Mammary epithelial cell (primary cell): ENCODE measurements at regions of chr1 and their contacts with region 1.

Region 1: GRCh38 chr1:235415008-235415904 is 48.0 kb downstream of the TBCE start:
- DNase-seq: peak; percentile 67
- H3K4me3 ChIP-seq: no peak overlapping the region
- H3K27ac ChIP-seq: no peak overlapping the region
- H3K4me1 ChIP-seq: peaks cover 4% of the 10 kb centered on the region
- H3K27me3 ChIP-seq: no peaks in the 10 kb centered on the region
- CTCF ChIP-seq: peak; percentile 66 to 83

Region 2: GRCh38 chr1:234478481-234479309 is 936.6 kb before region 1 on chr1 and contains the start of gene TARBP1:
- CTCF ChIA-PET with region 1: no interaction called
- dilution Hi-C with region 1: no loop called
- in situ Hi-C with region 1: loop called in 1 of 2 experiments (anchors 25 kb)
- intact Hi-C with region 1: no loop called
- DNase-seq: peak; percentile 73
- H3K4me3 ChIP-seq: peak within 1 kb of the TSS; percentile 73 to 82 (median 78)
- H3K27ac ChIP-seq: no peak within 1 kb of the TSS
- H3K4me1 ChIP-seq: peaks cover 11% of the 10 kb centered on the region
- H3K27me3 ChIP-seq: no peaks in the 10 kb centered on the region
- CTCF ChIP-seq: peak in 1 of 2 donors; percentile 16
- total RNA-seq, gene TARBP1: 16.1 to 18.0 TPM

Region 3: GRCh38 chr1:235093696-235094592 is 321.3 kb before region 1 on chr1:
- CTCF ChIA-PET with region 1: no interaction called
- dilution Hi-C with region 1: no loop called
- in situ Hi-C with region 1: no loop called
- intact Hi-C with region 1: loop called (anchors 1 kb)
- DNase-seq: no peak
- H3K4me3 ChIP-seq: no peak overlapping the region
- H3K27ac ChIP-seq: no peak overlapping the region
- H3K4me1 ChIP-seq: no peaks in the 10 kb centered on the region
- H3K27me3 ChIP-seq: no peaks in the 10 kb centered on the region
- CTCF ChIP-seq: peak; percentile 90 to 92

Region 4: DNA sequence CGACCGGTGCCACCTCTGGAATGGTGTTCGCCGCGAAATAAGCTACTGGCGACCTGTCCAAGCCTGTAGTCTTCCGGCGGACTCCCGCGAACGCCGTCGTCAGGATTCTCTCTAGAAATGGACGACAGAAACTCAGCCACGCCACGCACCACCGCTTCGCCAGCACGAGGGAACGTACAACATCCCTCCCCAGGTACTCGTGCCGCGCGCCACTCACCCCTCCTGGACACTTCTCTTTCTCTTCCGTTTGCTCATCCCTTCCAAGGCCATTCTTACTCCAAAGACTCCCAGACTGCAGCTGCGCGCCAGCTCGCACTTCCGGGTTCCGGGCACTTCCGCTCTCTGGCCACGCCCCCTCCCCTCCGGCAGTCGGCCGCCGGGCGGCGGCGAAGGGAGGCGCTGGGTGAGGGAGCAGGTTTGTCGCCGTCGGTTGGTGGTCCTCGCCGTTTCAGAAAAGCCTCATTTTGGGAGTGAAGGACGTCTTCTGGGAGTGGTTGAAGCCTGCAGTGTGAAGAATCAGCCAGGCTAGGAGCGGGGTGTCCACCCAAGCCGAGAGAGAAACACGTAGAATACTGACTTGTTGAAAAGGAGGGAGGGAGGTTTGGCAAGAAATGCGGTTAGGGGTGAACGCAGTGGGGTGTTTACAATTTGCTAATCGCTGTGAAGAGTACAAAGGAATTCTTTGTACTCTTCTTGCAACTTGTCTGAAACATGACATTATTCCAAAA is 254.1 kb before region 1 on chr1 and contains the start of gene RBM34:
- CTCF ChIA-PET with region 1: no interaction called
- dilution Hi-C with region 1: no loop called
- in situ Hi-C with region 1: no loop called
- intact Hi-C with region 1: loop called (anchors 2 kb)
- DNase-seq: peak; percentile 90
- H3K4me3 ChIP-seq: peak within 1 kb of the TSS; percentile 76 to 94 (median 81)
- H3K27ac ChIP-seq: peak within 1 kb of the TSS; percentile 90
- H3K4me1 ChIP-seq: peaks cover 12% of the 10 kb centered on the region
- H3K27me3 ChIP-seq: no peaks in the 10 kb centered on the region
- CTCF ChIP-seq: peak in 1 of 2 donors; percentile 28
- total RNA-seq, gene RBM34: 44.8 to 96.2 TPM

Region 5: DNA sequence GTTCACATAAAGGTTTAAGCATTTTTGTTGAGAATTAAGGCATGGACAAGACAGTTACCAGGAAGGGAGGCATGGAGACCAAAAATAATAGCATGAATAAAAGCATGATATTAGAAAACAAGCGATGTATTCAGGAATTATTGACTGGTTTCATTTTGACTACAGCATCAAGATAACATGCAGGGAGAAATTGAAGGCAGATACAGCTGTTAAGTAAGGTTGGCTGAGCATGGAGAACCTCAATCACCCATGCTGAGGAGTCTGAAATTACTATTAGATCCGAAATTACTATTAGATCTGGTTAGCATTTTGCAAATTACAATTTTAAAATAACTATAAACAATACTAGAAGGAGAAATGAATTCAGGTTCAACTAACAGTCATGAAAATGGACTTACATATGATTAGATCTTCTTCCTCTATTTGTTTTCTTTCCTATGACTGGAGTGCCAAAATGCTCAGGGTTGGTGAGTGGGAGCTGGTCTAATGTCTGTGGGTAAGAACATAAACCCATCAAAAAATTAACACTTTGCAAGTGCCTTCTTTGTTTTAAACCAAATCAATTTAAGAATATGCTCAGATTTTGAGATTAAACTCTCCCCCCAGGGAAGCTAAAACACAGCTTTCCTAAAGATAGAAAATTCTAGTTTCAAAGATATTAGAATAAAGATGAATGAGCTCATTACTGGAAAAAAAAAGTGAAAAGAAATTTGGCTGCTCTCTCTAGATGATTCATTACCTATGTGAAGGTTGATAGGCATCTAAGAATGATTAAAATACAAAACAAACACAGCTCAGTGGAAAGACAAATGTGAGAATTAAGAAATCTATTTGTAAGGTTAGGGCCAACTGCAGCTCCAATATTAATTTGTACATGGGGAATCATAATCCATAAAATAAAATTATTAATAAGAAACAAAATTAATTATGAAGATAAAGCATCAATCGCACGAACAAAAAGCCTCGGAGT is 168.9 kb before region 1 on chr1:
- CTCF ChIA-PET with region 1: no interaction called
- dilution Hi-C with region 1: no loop called
- in situ Hi-C with region 1: loop called (anchors 5 kb)
- intact Hi-C with region 1: no loop called
- DNase-seq: peak; percentile 14
- H3K4me3 ChIP-seq: no peak overlapping the region
- H3K27ac ChIP-seq: no peak overlapping the region
- H3K4me1 ChIP-seq: no peaks in the 10 kb centered on the region
- H3K27me3 ChIP-seq: no peaks in the 10 kb centered on the region
- CTCF ChIP-seq: no peak

Region 6: DNA sequence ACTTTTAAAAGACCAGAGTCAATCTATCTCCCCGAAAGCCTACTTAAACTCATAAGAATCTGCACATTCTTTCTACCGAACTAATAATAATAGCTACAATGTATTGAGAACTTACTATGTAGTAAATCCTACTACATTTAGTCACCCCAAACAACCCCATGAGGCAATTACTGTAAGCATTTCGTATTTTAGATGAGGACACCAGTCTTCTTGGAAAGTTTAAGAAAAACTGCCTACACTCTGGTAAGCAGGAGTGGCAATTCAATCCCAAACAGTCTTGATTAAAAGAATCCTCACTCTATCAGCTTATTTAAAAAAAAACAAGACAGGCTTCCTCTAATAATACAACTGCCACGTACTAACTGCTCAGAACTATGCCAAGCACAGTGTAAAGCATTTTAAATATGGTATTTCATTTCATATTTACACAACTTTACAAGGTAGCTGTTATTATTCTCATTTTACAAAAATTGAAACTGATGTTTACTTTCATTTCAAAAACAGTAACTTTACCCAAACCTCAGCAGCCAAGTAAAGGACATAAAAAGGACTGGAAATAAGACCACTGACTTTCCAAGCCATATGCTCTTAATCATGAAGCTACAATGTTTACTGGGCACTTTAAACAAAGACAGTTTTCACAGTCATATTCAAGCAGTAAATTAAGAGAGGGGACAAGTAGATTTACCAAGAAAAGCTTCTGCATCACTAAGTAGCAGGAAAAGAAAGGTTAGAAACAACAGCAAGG is 101.2 kb before region 1 on chr1:
- CTCF ChIA-PET with region 1: no interaction called
- dilution Hi-C with region 1: loop called (anchors 5 kb)
- in situ Hi-C with region 1: no loop called
- intact Hi-C with region 1: no loop called
- DNase-seq: no peak
- H3K4me3 ChIP-seq: no peak overlapping the region
- H3K27ac ChIP-seq: no peak overlapping the region
- H3K4me1 ChIP-seq: peaks cover 13% of the 10 kb centered on the region
- H3K27me3 ChIP-seq: no peaks in the 10 kb centered on the region
- CTCF ChIP-seq: no peak

Region 7: GRCh38 chr1:235367000-235367908 is 48.0 kb before region 1 on chr1 and contains the start of gene TBCE:
- CTCF ChIA-PET with region 1: interaction called, 4 read pairs
- dilution Hi-C with region 1: no loop called
- in situ Hi-C with region 1: loop called in 1 of 2 experiments (anchors 10 kb)
- intact Hi-C with region 1: loop called (anchors 1 kb)
- DNase-seq: peak; percentile 100
- H3K4me3 ChIP-seq: peak within 1 kb of the TSS; percentile 53 to 68 (median 63)
- H3K27ac ChIP-seq: peak within 1 kb of the TSS; percentile 94
- H3K4me1 ChIP-seq: peaks cover 15% of the 10 kb centered on the region
- H3K27me3 ChIP-seq: no peaks in the 10 kb centered on the region
- CTCF ChIP-seq: peak in 1 of 2 donors; percentile 44
- total RNA-seq, gene TBCE: 15.8 to 19.4 TPM